CD8-positive, alpha-beta T cell (primary cell): ENCODE measurements at regions of chr3 and their contacts with region 1.

Region 1: GRCh38 chr3:123449102-123449996 is 459 bp upstream of the ADCY5 start:
- DNase-seq: peak in 2 of 9 experiments; percentile 15 to 37
- ATAC-seq: peak; percentile 24
- H3K4me3 ChIP-seq: peak overlapping the region; percentile 21 to 43
- H3K4me3 Mint-ChIP-seq: peak overlapping the region; percentile 62
- H3K27ac ChIP-seq: no peak overlapping the region
- H3K27ac Mint-ChIP-seq: no peak overlapping the region
- H3K4me1 ChIP-seq: no peaks in the 10 kb centered on the region
- H3K4me1 Mint-ChIP-seq: peaks cover 5% of the 10 kb centered on the region
- H3K27me3 ChIP-seq: peaks cover 7 to 22% of the 10 kb centered on the region in 2 experiments
- H3K27me3 Mint-ChIP-seq: peaks cover 52% of the 10 kb centered on the region
- CTCF ChIP-seq: no peak

Region 2: DNA sequence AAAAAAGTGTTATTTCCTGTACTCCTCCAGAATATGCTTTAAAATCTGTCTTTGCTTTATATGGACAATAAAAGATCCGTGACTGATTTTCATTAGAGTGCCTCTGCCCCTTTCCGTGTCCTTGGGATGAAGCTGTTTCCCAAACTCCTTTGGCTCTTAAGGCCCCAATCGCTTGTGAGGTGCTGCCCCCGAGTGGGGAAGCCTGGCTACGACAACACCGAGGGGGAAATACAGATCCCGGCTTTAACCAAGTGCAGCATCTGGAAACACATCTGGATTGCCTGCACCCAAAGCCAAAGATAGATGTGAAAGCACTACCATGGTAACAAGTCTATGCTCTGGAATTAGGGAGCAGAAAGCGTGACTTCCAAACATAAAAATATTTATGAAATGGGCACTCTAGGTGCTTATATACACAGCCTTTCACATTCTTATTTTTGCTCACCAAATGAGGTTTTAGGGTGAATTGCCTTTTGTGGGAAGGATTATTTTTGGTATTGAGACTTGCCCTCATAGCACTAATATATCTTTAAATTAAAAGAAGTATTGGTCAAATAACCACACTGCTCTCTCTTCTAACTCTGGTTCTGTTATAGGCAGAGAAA is 40.2 kb after region 1 on chr3:
- CTCF ChIA-PET with region 1: interaction called, 3 read pairs
- POLR2A ChIA-PET with region 1: no interaction called
- intact Hi-C with region 1: loop called in 1 of 2 experiments (anchors 1 kb)
- DNase-seq: peak in 6 of 9 experiments; percentile 10 to 53 (median 37)
- ATAC-seq: no peak
- H3K4me3 ChIP-seq: no peak overlapping the region
- H3K4me3 Mint-ChIP-seq: no peak overlapping the region
- H3K27ac ChIP-seq: no peak overlapping the region
- H3K27ac Mint-ChIP-seq: no peak overlapping the region
- H3K4me1 ChIP-seq: no peaks in the 10 kb centered on the region
- H3K4me1 Mint-ChIP-seq: peaks cover 5% of the 10 kb centered on the region
- H3K27me3 ChIP-seq: no peaks in the 10 kb centered on the region
- H3K27me3 Mint-ChIP-seq: peaks cover 3% of the 10 kb centered on the region
- CTCF ChIP-seq: peak; percentile 64

Region 3: GRCh38 chr3:123559040-123559861 is 109.9 kb after region 1 on chr3:
- CTCF ChIA-PET with region 1: interaction called, 12 read pairs
- POLR2A ChIA-PET with region 1: no interaction called
- intact Hi-C with region 1: loop called (anchors 2 kb)
- DNase-seq: peak in 3 of 9 experiments; percentile 12 to 73 (median 64)
- ATAC-seq: no peak
- H3K4me3 ChIP-seq: no peak overlapping the region
- H3K4me3 Mint-ChIP-seq: no peak overlapping the region
- H3K27ac ChIP-seq: no peak overlapping the region
- H3K27ac Mint-ChIP-seq: no peak overlapping the region
- H3K4me1 ChIP-seq: no peaks in the 10 kb centered on the region
- H3K4me1 Mint-ChIP-seq: no peaks in the 10 kb centered on the region
- H3K27me3 ChIP-seq: no peaks in the 10 kb centered on the region
- H3K27me3 Mint-ChIP-seq: no peaks in the 10 kb centered on the region
- CTCF ChIP-seq: peak; percentile 98